Ovary (tissue), 10 donors: ENCODE measurements at regions of chr14 and their contacts with region 1.

Region 1: GRCh38 chr14:68788996-68789820 is 3.7 kb downstream of the ZFP36L1 start:
- DNase-seq: peak; percentile 65 to 88 (median 82)
- H3K4me3 ChIP-seq: peak overlapping the region; percentile 85
- H3K27ac ChIP-seq: peak overlapping the region; percentile 88 to 100
- H3K4me1 ChIP-seq: peaks cover 8% of the 10 kb centered on the region
- H3K27me3 ChIP-seq: no peaks in the 10 kb centered on the region
- CTCF ChIP-seq: peak; percentile 16 to 57 (median 54)
- EP300 ChIP-seq: no peak
- POLR2A ChIP-seq: no peak

Region 2: DNA sequence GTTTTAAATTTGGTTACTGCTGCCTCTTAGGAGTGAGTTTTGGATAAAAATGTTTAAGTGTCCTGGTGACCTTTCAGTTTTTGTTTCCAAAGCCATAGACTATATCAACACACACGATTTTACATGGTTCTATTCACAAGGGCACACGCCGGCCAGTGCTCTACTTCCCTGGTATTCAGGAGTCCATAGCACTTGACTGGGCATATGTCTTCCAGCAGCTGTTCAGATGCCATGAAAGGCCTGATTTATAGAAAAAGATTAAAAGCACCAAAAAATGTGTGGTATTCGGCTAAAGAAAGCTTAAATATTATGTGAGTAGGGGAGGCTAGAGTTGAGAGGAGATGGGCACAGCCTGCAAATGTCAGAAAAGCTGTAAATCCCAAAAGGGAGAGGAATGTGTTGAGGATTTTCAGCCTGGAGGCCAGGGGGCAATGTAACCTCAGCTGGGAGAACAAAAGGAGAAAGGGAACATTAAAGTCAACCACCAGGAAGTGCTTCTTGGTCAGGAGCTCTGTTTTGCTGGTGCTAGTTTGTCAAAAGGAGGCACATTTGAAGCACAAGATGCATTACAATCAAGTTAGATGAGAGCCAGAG is 491.2 kb before region 1 on chr14:
- intact Hi-C with region 1: loop called in 1 of 4 experiments (anchors 5 kb)
- DNase-seq: no peak
- H3K4me3 ChIP-seq: no peak overlapping the region
- H3K27ac ChIP-seq: peak overlapping the region in 1 of 2 donors; percentile 62
- H3K4me1 ChIP-seq: peaks cover 27% of the 10 kb centered on the region
- H3K27me3 ChIP-seq: no peaks in the 10 kb centered on the region
- CTCF ChIP-seq: peak in 1 of 3 donors; percentile 24
- EP300 ChIP-seq: no peak
- POLR2A ChIP-seq: no peak

Region 3: GRCh38 chr14:68392393-68393141 is 396.6 kb before region 1 on chr14:
- intact Hi-C with region 1: loop called in 2 of 4 experiments (anchors 10 kb)
- DNase-seq: peak in 4 of 5 donors; percentile 65 to 75 (median 68)
- H3K4me3 ChIP-seq: no peak overlapping the region
- H3K27ac ChIP-seq: peak overlapping the region; percentile 17 to 76
- H3K4me1 ChIP-seq: peaks cover 43% of the 10 kb centered on the region
- H3K27me3 ChIP-seq: no peaks in the 10 kb centered on the region
- CTCF ChIP-seq: no peak
- EP300 ChIP-seq: no peak
- POLR2A ChIP-seq: no peak

Region 4: GRCh38 chr14:68548194-68549056 is 240.8 kb before region 1 on chr14:
- intact Hi-C with region 1: loop called (anchors 2 to 10 kb)
- DNase-seq: peak; percentile 89 to 96 (median 93)
- H3K4me3 ChIP-seq: no peak overlapping the region
- H3K27ac ChIP-seq: peak overlapping the region; percentile 78 to 92
- H3K4me1 ChIP-seq: peaks cover 40% of the 10 kb centered on the region
- H3K27me3 ChIP-seq: no peaks in the 10 kb centered on the region
- CTCF ChIP-seq: no peak
- EP300 ChIP-seq: peak; percentile 85
- POLR2A ChIP-seq: peak; percentile 49

Region 5: DNA sequence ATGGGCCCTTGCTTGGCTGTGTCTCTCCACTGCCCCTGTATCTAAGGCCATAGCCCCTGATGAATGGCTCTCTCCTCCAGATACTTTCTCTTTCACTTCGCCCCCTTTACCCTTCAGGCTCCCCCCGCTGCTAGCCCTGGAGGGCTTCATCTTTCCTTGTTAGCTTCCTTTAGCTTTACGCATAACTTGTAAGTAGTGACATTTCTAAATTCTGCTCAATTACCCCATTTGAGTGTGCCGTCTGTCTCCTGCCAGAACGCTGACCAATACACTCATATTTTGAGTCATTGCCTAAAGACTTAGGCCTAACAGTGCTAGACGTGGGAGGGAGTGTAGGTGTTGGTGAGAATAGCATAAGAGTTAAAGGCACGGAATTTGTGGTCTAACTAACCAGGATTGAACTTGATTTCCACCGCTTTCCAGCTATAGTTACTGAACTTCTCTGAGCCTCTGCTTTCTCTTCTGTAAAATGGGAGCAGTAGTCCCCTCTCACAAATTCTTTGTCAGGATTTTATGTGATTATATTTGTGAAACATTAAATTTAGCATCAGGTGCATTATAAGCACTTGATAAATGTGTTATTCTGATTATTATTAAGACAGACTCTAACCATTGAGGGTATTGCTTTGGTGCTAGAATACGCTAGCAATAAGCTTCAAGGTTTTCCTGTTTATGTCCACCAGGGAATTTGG is 125.7 kb before region 1 on chr14:
- intact Hi-C with region 1: loop called in 1 of 4 experiments (anchors 5 kb)
- DNase-seq: peak in 2 of 5 donors; percentile 7 to 28
- H3K4me3 ChIP-seq: no peak overlapping the region
- H3K27ac ChIP-seq: peak overlapping the region in 1 of 2 donors; percentile 76
- H3K4me1 ChIP-seq: peaks cover 41% of the 10 kb centered on the region
- H3K27me3 ChIP-seq: no peaks in the 10 kb centered on the region
- CTCF ChIP-seq: peak in 1 of 3 donors; percentile 9
- EP300 ChIP-seq: no peak
- POLR2A ChIP-seq: no peak

Region 6: DNA sequence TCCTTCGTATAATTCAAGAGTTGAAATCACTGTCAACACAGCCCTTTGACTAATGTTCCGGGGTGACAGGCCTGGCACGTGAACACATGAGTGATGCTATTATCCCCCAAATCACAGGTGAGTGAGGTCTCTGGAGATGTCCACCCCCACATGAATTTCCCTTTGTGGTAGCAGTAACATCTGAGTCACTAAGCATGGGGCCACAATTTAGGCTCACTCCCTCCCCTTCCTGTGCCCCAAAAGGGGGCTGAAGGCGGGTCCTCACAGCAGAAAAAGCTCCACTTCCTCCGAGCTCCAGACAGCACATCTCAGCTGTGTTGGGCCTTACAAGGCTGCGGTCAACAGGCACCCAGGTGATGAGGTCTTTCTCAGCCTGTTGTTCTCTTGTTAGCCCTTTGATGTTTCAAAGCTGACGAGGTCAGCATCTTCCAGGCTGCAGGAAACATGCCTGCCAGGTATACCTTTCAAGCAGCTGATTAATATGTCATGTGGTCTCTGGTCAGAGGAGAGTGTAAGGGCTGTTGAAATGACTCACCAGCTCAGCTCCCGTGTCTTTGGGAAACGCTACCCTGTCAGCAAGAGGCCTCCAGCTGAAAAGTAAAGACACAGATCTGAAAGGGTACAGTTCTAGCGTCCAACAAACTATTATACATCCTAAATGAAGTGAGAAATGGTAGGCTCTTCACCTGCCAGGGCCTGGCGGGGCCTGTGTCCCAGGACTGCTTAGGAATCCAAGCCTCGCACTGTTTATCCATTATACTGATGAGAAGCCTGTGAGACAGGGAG is 103.6 kb before region 1 on chr14:
- intact Hi-C with region 1: loop called in 1 of 4 experiments (anchors 10 kb)
- DNase-seq: peak in 1 of 5 donors; percentile 18
- H3K4me3 ChIP-seq: no peak overlapping the region
- H3K27ac ChIP-seq: no peak overlapping the region
- H3K4me1 ChIP-seq: peaks cover 35% of the 10 kb centered on the region
- H3K27me3 ChIP-seq: no peaks in the 10 kb centered on the region
- CTCF ChIP-seq: no peak
- EP300 ChIP-seq: no peak
- POLR2A ChIP-seq: no peak